Activated CD8-positive, alpha-beta T cell treated with anti-CD3 and anti-CD28 coated beads, Interleukin-2, amount 10 ng/mL, durations not matched to agents 7 days and 5 days (primary cell): ENCODE measurements at regions of chr19 and their contacts with region 1.

Region 1: DNA sequence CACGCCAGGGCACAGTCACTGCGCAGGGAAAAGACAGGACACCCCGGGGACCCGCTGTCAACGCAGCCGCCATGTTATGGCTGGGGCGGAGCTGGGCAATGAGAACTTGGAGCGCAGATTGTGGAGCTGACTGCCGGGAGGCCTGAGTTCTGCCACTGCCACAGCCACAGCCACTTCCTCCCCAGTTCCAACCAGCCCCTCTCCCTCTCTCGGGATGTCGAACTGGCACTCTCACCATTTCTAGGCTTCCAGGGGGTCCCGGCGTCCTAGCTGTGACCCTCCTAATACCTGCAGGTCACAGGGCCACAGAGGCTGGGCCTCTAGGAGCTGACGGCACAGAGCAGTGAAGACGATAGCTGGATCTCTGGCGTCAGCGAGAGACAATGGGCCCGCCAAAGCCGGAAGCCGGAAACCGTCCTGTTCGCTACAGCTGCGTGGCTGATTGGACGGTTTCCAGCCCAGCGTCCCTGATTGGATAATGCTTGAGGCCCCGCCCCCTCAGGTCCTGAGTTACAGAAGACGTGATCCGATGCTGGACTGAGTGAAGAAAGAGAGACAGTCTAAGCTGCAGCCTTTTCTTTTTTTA is at the start of gene ZNF506:
- DNase-seq: peak; percentile 98
- ATAC-seq: peak; percentile 98
- H3K4me3 Mint-ChIP-seq: peak within 1 kb of the TSS; percentile 100
- H3K27ac Mint-ChIP-seq: peak within 1 kb of the TSS; percentile 100
- H3K4me1 Mint-ChIP-seq: peaks cover 34% of the 10 kb centered on the region
- H3K27me3 Mint-ChIP-seq: no peaks in the 10 kb centered on the region
- total RNA-seq, gene ZNF506: 22.4 to 25.1 TPM

Region 2: GRCh38 chr19:19776041-19777008 is 45.1 kb before region 1 on chr19:
- CTCF ChIA-PET with region 1: interaction called, 3 read pairs
- POLR2A ChIA-PET with region 1: interaction called, 29 read pairs
- DNase-seq: peak; percentile 96
- ATAC-seq: peak; percentile 99
- H3K4me3 Mint-ChIP-seq: peak overlapping the region; percentile 93
- H3K27ac Mint-ChIP-seq: peak overlapping the region; percentile 94
- H3K4me1 Mint-ChIP-seq: peaks cover 48% of the 10 kb centered on the region
- H3K27me3 Mint-ChIP-seq: no peaks in the 10 kb centered on the region

Region 3: DNA sequence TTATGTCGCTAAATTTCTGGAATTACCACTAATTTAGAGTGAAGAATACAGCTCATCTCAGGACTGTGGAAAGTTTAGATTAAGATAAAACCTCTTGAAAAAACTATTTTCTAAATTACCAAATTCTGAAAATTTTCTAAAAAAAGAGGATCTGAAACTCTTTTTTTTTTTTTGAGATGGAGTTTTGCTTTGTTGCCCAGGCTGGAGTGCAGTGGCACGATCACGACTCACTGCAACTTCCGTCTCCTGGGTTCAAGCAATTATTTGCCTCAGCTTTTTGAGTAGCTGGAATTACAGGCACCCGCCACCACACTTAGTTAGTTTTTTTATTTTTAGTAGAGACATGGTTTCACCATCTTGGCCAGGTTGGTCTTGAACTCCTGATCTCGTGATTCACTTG is 27.6 kb after region 1 on chr19:
- CTCF ChIA-PET with region 1: no interaction called
- POLR2A ChIA-PET with region 1: no interaction called
- DNase-seq: no peak
- ATAC-seq: no peak
- H3K4me3 Mint-ChIP-seq: no peak overlapping the region
- H3K27ac Mint-ChIP-seq: no peak overlapping the region
- H3K4me1 Mint-ChIP-seq: no peaks in the 10 kb centered on the region
- H3K27me3 Mint-ChIP-seq: no peaks in the 10 kb centered on the region

Region 4: GRCh38 chr19:19860756-19861390 is 39.4 kb after region 1 on chr19:
- CTCF ChIA-PET with region 1: interaction called, 8 read pairs
- POLR2A ChIA-PET with region 1: interaction called, 47 read pairs
- DNase-seq: peak; percentile 64
- ATAC-seq: peak; percentile 21
- H3K4me3 Mint-ChIP-seq: peak overlapping the region; percentile 68
- H3K27ac Mint-ChIP-seq: peak overlapping the region; percentile 68
- H3K4me1 Mint-ChIP-seq: peaks cover 15% of the 10 kb centered on the region
- H3K27me3 Mint-ChIP-seq: no peaks in the 10 kb centered on the region

Region 5: DNA sequence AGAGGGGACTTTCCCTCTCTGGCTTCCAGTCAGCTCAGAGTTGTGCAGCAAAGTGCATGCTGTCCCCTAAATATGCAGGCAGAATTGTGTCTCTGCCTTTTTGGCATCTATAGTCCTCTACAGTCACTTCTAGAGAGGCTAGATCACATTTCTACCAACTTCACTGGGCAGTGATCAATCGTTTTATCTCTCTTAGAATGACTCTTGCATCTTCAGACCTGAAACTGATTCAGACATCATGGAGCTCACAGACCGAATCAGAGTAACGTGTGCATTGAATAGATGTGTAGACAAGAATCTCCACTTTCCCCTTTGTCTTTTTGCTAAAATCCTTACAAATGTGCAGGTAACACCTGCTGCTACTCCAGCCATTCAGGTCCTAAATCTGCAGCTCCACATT is 50.5 kb after region 1 on chr19:
- CTCF ChIA-PET with region 1: no interaction called
- POLR2A ChIA-PET with region 1: interaction called, 47 read pairs
- DNase-seq: no peak
- ATAC-seq: no peak
- H3K4me3 Mint-ChIP-seq: no peak overlapping the region
- H3K27ac Mint-ChIP-seq: no peak overlapping the region
- H3K4me1 Mint-ChIP-seq: peaks cover 38% of the 10 kb centered on the region
- H3K27me3 Mint-ChIP-seq: no peaks in the 10 kb centered on the region

Region 6: DNA sequence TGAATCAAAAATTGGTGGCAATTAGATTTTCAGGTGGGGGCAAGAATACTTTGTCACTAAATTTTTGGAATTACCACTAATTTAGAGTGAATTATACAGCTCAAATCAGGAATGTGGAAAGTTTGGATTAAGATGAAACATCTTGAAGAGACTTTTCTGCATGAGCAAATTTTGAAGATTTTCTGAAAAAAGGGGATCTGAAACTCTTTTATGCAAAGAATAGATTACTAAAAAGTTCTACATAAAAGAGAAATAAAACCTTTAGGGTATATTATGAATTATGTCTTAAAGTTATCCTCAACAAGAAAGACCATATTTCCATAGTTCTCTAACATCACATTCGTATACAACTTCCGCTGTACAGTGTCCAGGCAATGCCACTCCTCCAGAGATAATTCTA is 115.9 kb after region 1 on chr19:
- CTCF ChIA-PET with region 1: no interaction called
- POLR2A ChIA-PET with region 1: no interaction called
- DNase-seq: no peak
- ATAC-seq: no peak
- H3K4me3 Mint-ChIP-seq: no peak overlapping the region
- H3K27ac Mint-ChIP-seq: no peak overlapping the region
- H3K4me1 Mint-ChIP-seq: no peaks in the 10 kb centered on the region
- H3K27me3 Mint-ChIP-seq: no peaks in the 10 kb centered on the region